Ovary (tissue), 10 donors: ENCODE measurements at regions of chr11 and their contacts with region 1.

Region 1: GRCh38 chr11:127890030-127890611 is 697.2 kb downstream of the ETS1 start:
- DNase-seq: no peak
- H3K4me3 ChIP-seq: no peak overlapping the region
- H3K27ac ChIP-seq: no peak overlapping the region
- H3K4me1 ChIP-seq: no peaks in the 10 kb centered on the region
- H3K27me3 ChIP-seq: no peaks in the 10 kb centered on the region
- CTCF ChIP-seq: no peak
- EP300 ChIP-seq: no peak
- POLR2A ChIP-seq: no peak

Region 2: GRCh38 chr11:127816962-127817361 is 73.2 kb before region 1 on chr11:
- intact Hi-C with region 1: loop called in 1 of 4 experiments (anchors 2 kb)
- DNase-seq: no peak
- H3K4me3 ChIP-seq: no peak overlapping the region
- H3K27ac ChIP-seq: no peak overlapping the region
- H3K4me1 ChIP-seq: no peaks in the 10 kb centered on the region
- H3K27me3 ChIP-seq: no peaks in the 10 kb centered on the region
- CTCF ChIP-seq: no peak
- EP300 ChIP-seq: no peak
- POLR2A ChIP-seq: no peak